ENCODE measurements at regions of chr1 and their contacts with region 1.

Region 1: GRCh38 chr1:203625628-203626019 is 1.0 kb upstream of the ATP2B4 start:
- DNase-seq: peak; percentile 45 to 91 (median 57)
- ATAC-seq: peak; percentile 66
- H3K4me3 ChIP-seq: peak overlapping the region; percentile 92
- H3K4me3 Mint-ChIP-seq: peak overlapping the region; percentile 77
- H3K27ac ChIP-seq: peak overlapping the region; percentile 72 to 86
- H3K27ac Mint-ChIP-seq: peak overlapping the region; percentile 81
- H3K4me1 ChIP-seq: peaks cover 49% of the 10 kb centered on the region
- H3K4me1 Mint-ChIP-seq: peaks cover 47% of the 10 kb centered on the region
- H3K27me3 ChIP-seq: no peaks in the 10 kb centered on the region
- H3K27me3 Mint-ChIP-seq: no peaks in the 10 kb centered on the region
- CTCF ChIP-seq: peak; percentile 74

Region 2: GRCh38 chr1:202362212-202362611 is 1263.4 kb before region 1 on chr1:
- CTCF ChIA-PET with region 1: no interaction called
- POLR2A ChIA-PET with region 1: no interaction called
- intact Hi-C with region 1: no loop called
- DNase-seq: no peak
- ATAC-seq: no peak
- H3K4me3 ChIP-seq: no peak overlapping the region
- H3K4me3 Mint-ChIP-seq: no peak overlapping the region
- H3K27ac ChIP-seq: no peak overlapping the region
- H3K27ac Mint-ChIP-seq: no peak overlapping the region
- H3K4me1 ChIP-seq: no peaks in the 10 kb centered on the region
- H3K4me1 Mint-ChIP-seq: peaks cover 3% of the 10 kb centered on the region
- H3K27me3 ChIP-seq: no peaks in the 10 kb centered on the region
- H3K27me3 Mint-ChIP-seq: no peaks in the 10 kb centered on the region
- CTCF ChIP-seq: no peak

Region 3: GRCh38 chr1:203340112-203340804 is 285.4 kb before region 1 on chr1:
- CTCF ChIA-PET with region 1: interaction called, 3 read pairs
- POLR2A ChIA-PET with region 1: no interaction called
- intact Hi-C with region 1: loop called in 1 of 2 experiments (anchors 5 kb)
- DNase-seq: peak; percentile 36 to 83 (median 44)
- ATAC-seq: peak; percentile 63
- H3K4me3 ChIP-seq: no peak overlapping the region
- H3K4me3 Mint-ChIP-seq: no peak overlapping the region
- H3K27ac ChIP-seq: no peak overlapping the region
- H3K27ac Mint-ChIP-seq: no peak overlapping the region
- H3K4me1 ChIP-seq: peaks cover 35% of the 10 kb centered on the region
- H3K4me1 Mint-ChIP-seq: peaks cover 43% of the 10 kb centered on the region
- H3K27me3 ChIP-seq: peaks cover 0 to 11% of the 10 kb centered on the region in 2 experiments
- H3K27me3 Mint-ChIP-seq: peaks cover 13% of the 10 kb centered on the region
- CTCF ChIP-seq: peak; percentile 93

Region 4: DNA sequence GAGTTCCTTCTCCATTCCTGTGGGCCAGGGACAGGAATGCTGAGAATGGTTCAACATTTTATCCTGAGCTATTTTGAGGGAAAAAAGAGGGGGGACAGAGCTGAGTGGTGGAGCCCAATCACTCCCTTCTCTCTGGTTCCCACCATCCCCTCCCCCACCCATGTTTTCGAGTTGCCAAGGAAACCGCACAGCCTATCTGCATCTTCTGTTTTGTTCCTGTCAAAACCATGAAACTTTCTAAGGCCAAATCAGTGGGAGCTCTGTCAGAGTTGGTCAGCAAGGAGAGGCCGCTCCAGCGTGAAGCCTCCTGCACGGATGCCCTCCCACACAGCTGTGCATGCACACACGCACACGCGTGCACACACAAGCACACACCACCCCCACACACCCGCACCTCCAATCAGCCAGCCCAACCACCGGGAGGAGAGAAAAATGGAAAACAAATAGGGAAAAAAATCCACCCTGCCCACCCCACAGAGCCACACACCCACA is 53.4 kb before region 1 on chr1:
- CTCF ChIA-PET with region 1: no interaction called
- POLR2A ChIA-PET with region 1: no interaction called
- intact Hi-C with region 1: no loop called
- DNase-seq: no peak
- ATAC-seq: no peak
- H3K4me3 ChIP-seq: no peak overlapping the region
- H3K4me3 Mint-ChIP-seq: no peak overlapping the region
- H3K27ac ChIP-seq: no peak overlapping the region
- H3K27ac Mint-ChIP-seq: no peak overlapping the region
- H3K4me1 ChIP-seq: no peaks in the 10 kb centered on the region
- H3K4me1 Mint-ChIP-seq: no peaks in the 10 kb centered on the region
- H3K27me3 ChIP-seq: no peaks in the 10 kb centered on the region
- H3K27me3 Mint-ChIP-seq: no peaks in the 10 kb centered on the region
- CTCF ChIP-seq: no peak

Region 5: GRCh38 chr1:203586496-203587081 is 39.0 kb before region 1 on chr1:
- CTCF ChIA-PET with region 1: no interaction called
- POLR2A ChIA-PET with region 1: no interaction called
- intact Hi-C with region 1: no loop called
- DNase-seq: no peak
- ATAC-seq: no peak
- H3K4me3 ChIP-seq: no peak overlapping the region
- H3K4me3 Mint-ChIP-seq: no peak overlapping the region
- H3K27ac ChIP-seq: no peak overlapping the region
- H3K27ac Mint-ChIP-seq: no peak overlapping the region
- H3K4me1 ChIP-seq: no peaks in the 10 kb centered on the region
- H3K4me1 Mint-ChIP-seq: no peaks in the 10 kb centered on the region
- H3K27me3 ChIP-seq: no peaks in the 10 kb centered on the region
- H3K27me3 Mint-ChIP-seq: no peaks in the 10 kb centered on the region
- CTCF ChIP-seq: no peak

Region 6: DNA sequence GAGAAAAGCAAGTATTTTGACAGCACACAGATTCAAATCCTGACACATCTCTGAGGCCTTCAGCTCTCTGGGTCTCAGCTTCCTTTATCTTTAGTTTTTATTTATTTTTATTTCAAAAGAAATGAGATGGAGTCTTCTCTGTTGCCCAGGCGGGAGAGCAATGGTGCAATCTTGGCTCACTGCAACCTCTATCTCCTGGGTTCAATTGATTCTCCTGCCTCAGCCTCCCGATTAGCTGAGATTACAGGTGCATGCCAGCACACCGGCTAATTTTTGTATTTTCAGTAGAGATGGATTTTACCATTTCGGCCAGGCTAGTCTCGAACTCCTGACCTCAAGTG is 18.1 kb before region 1 on chr1:
- CTCF ChIA-PET with region 1: interaction called, 11 read pairs
- POLR2A ChIA-PET with region 1: interaction called, 28 read pairs
- intact Hi-C with region 1: loop called (anchors 1 kb)
- DNase-seq: no peak
- ATAC-seq: no peak
- H3K4me3 ChIP-seq: no peak overlapping the region
- H3K4me3 Mint-ChIP-seq: no peak overlapping the region
- H3K27ac ChIP-seq: peak overlapping the region; percentile 7 to 34
- H3K27ac Mint-ChIP-seq: peak overlapping the region; percentile 82
- H3K4me1 ChIP-seq: peaks cover 61% of the 10 kb centered on the region
- H3K4me1 Mint-ChIP-seq: peaks cover 55% of the 10 kb centered on the region
- H3K27me3 ChIP-seq: no peaks in the 10 kb centered on the region
- H3K27me3 Mint-ChIP-seq: no peaks in the 10 kb centered on the region
- CTCF ChIP-seq: no peak

Region 7: DNA sequence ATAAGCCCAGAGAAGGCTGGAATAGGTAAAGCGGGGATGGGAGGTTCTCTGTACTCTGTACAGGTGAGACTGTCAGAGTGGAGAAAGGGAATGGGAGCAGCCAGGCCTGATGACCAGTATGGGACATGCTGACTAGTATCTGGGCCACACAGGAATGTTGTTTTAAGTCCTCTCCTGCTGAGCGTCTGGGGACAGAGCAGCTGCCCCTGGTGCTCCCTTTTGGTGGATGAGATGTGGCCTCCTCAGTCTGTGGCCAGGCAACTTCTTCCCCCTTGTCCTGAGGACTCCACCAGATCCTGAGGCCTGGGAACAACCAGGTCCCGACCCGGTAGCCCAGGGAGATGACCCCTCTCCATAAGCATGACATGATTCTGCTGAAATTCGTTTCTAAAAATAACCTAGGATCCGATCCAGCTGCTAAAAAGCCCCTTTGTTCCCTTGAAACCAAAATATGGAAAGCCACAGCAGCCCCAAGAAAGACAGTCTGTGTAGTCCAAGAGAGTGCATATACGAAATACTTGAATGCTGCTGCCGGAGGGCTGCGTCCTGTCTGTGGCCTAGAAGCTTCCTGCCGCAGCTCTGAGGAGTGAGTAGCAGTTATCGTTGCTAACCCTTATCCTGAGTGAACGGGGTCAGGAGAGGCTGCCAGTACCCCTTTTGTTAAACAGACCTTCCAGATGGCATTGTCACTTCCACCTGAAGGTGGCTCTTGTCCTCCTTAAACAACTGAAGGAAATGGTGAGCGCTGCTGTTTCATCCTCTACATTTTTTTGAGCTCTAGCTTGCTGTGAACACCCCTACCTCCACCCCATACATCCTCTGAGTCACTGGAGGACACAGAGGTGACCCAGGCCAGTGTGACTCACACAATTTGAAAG is 48.2 kb after region 1 on chr1:
- CTCF ChIA-PET with region 1: interaction called, 69 read pairs
- POLR2A ChIA-PET with region 1: interaction called, 114 read pairs
- intact Hi-C with region 1: loop called (anchors 1 to 5 kb)
- DNase-seq: peak; percentile 50 to 94 (median 60)
- ATAC-seq: peak; percentile 87
- H3K4me3 ChIP-seq: peak overlapping the region; percentile 8
- H3K4me3 Mint-ChIP-seq: peak overlapping the region; percentile 82
- H3K27ac ChIP-seq: peak overlapping the region; percentile 59 to 74
- H3K27ac Mint-ChIP-seq: peak overlapping the region; percentile 93
- H3K4me1 ChIP-seq: peaks cover 86% of the 10 kb centered on the region
- H3K4me1 Mint-ChIP-seq: peaks cover 85% of the 10 kb centered on the region
- H3K27me3 ChIP-seq: no peaks in the 10 kb centered on the region
- H3K27me3 Mint-ChIP-seq: no peaks in the 10 kb centered on the region
- CTCF ChIP-seq: peak; percentile 64

Region 8: DNA sequence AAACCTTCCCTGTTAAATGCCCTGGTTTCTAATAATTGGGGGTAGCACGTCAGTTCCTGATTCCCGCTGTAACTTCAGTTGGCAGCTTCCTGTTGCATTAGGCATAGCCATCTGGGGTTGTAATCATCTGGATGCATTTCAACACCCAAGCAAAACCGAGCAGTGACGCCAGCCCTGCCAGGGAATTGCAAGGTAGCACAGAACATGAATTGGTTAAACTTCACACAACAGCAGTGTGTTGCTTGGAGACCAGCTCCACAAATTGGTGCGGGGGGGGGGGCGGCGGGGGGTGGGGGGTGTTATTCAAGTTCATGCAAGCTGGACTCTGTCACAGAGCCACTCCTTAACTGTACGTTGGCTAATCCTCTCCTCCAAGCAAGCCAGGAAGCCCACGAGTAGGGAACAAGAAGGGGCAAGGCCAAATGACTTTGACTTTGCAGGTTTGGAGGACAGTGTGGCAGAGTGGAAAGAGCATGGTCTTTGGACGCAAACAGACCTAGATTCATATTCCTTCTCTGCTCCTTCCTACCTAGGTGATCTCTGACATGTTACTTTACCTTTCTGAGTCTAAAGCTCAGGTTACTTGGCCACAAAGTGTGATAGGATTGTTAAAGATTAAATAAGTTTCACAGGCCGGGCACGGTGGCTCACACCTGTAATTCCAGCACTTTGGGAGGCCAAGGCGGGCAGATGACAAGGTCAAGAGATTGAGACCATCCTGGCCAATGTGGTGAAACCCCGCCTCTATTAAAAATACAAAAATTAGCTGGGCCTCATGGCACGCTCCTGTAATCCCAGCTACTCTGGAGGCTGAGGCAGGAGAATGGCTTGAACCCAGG is 144.1 kb after region 1 on chr1:
- CTCF ChIA-PET with region 1: interaction called, 6 read pairs
- POLR2A ChIA-PET with region 1: interaction called, 34 read pairs
- intact Hi-C with region 1: loop called (anchors 5 kb)
- DNase-seq: peak in 3 of 14 experiments; percentile 11 to 66 (median 60)
- ATAC-seq: no peak
- H3K4me3 ChIP-seq: no peak overlapping the region
- H3K4me3 Mint-ChIP-seq: peak overlapping the region; percentile 62
- H3K27ac ChIP-seq: no peak overlapping the region
- H3K27ac Mint-ChIP-seq: peak overlapping the region; percentile 79
- H3K4me1 ChIP-seq: peaks cover 32% of the 10 kb centered on the region
- H3K4me1 Mint-ChIP-seq: peaks cover 51% of the 10 kb centered on the region
- H3K27me3 ChIP-seq: no peaks in the 10 kb centered on the region
- H3K27me3 Mint-ChIP-seq: no peaks in the 10 kb centered on the region
- CTCF ChIP-seq: no peak

Region 9: DNA sequence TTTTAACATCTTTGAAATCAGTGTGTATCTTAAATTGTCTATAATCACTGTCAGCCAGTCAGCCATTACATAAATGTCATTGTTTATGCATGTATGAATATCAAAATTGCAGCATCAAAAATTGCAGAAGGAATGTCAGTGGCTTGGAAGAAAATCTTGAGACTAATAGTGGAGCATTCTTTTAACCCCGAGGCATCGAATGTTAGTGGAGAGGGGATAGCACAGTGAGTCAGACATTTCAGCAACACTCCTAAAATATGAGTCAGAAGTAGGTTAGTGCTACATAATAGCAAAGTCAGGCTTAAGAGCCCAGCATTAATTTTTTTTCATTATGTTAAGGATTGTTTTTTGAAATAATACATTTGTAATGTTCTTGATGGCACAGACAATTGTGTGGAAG is 281.3 kb after region 1 on chr1:
- CTCF ChIA-PET with region 1: no interaction called
- POLR2A ChIA-PET with region 1: no interaction called
- intact Hi-C with region 1: no loop called
- DNase-seq: no peak
- ATAC-seq: no peak
- H3K4me3 ChIP-seq: no peak overlapping the region
- H3K4me3 Mint-ChIP-seq: no peak overlapping the region
- H3K27ac ChIP-seq: no peak overlapping the region
- H3K27ac Mint-ChIP-seq: no peak overlapping the region
- H3K4me1 ChIP-seq: no peaks in the 10 kb centered on the region
- H3K4me1 Mint-ChIP-seq: no peaks in the 10 kb centered on the region
- H3K27me3 ChIP-seq: peaks cover 0 to 2% of the 10 kb centered on the region in 2 experiments
- H3K27me3 Mint-ChIP-seq: no peaks in the 10 kb centered on the region
- CTCF ChIP-seq: no peak

Measured in CD4-positive, alpha-beta T cell (primary cell).